Ascending aorta (tissue), 2 donors: ENCODE measurements at regions of chr17 and their contacts with region 1.

Region 1: DNA sequence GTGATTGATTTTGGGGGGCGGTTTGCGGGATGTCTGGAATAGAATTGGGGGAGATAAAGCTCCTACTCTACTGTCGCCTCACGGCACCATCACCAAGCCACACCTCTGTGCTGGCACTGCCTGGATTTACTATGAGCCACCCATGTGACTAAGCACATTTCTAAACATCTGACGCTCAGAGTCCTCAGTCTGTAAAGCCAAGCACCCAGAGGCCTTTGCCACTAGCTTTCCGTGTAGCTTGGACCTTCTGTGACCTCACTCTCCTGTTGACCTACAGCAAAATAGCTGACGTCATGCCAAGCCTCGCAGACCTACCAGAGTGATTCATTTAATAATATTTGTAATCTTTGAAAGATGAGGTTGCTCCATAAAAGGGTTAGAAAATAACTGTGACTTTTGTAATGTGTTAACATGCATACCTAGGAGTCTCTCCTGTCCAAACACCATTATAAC is 38.5 kb upstream of the MYOCD start:
- DNase-seq: peak; percentile 80 to 96
- H3K4me3 ChIP-seq: peak overlapping the region in 1 of 2 donors; percentile 32
- H3K27ac ChIP-seq: peak overlapping the region; percentile 95 to 96
- H3K4me1 ChIP-seq: peaks cover 15 to 45% of the 10 kb centered on the region in 2 donors
- H3K27me3 ChIP-seq: no peaks in the 10 kb centered on the region
- CTCF ChIP-seq: no peak

Region 2: GRCh38 chr17:12545877-12546513 is 81.2 kb before region 1 on chr17:
- intact Hi-C with region 1: loop called (anchors 1 kb)
- DNase-seq: no peak
- H3K4me3 ChIP-seq: no peak overlapping the region
- H3K27ac ChIP-seq: no peak overlapping the region
- H3K4me1 ChIP-seq: peaks cover 0 to 5% of the 10 kb centered on the region in 2 donors
- H3K27me3 ChIP-seq: no peaks in the 10 kb centered on the region
- CTCF ChIP-seq: peak; percentile 59 to 84 (median 78)

Region 3: DNA sequence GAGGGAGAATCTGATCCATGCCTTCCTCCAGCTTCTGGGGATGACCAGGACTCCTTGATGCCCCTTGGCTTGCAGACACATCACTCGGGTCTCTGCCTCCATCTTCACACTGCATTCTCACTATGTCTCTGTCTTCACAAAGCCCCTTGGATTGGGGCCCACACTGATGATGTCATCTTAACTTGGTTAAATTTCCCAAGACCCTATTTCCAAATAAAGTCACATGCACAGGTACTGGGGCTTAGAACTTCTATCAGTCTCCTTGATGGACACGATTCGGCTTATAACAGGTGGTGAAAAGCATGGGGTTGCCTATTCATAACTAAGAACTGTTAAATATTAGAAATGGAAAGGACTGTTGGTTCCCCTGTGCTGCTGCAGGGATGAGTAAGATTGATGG is 73.5 kb before region 1 on chr17:
- intact Hi-C with region 1: loop called (anchors 1 kb)
- DNase-seq: no peak
- H3K4me3 ChIP-seq: peak overlapping the region in 1 of 2 donors; percentile 42
- H3K27ac ChIP-seq: peak overlapping the region; percentile 84 to 93
- H3K4me1 ChIP-seq: peaks cover 8 to 44% of the 10 kb centered on the region in 2 donors
- H3K27me3 ChIP-seq: no peaks in the 10 kb centered on the region
- CTCF ChIP-seq: no peak

Region 4: DNA sequence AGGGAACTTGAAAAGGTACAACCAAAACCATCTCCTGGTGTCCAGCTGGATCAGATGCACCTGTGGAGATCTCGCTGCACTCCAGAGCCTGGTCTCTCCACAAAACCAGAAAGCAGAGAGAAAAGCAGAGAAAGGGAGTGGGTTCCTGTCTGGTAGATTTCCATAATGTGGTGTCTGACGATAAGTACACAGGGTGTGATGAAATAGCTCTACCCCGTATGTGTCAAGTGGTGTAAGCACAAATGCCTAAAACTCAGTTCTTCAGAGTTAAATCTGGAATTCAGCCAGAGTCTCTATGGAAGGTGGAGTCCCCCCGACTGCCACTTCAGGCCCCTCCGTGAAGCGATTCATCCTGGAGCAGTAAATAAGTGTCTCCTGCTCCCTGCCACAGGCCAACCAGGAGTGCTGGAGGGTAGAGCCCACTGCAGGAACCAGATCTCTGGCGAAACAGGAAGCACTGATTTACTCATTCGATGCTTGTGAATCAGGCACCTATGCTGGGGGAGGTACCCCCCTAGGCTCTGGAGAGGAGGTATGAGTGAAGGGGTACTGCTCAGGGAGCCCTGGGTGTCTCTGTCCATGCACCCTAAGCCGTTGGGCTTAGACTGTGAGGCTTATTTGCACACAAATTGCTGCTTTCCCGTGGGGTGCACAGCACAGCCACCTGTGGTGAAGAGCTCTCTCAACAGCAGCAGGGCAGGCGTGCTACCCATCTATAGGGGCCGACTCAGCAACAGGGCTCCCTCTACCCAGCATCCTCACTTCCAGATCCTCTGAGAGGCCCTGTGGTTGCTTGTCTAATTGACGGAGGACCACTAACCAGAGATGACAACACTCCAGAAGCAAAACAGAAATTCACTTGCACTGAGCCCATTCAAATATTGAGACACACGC is 58.6 kb before region 1 on chr17:
- intact Hi-C with region 1: loop called (anchors 5 kb)
- DNase-seq: no peak
- H3K4me3 ChIP-seq: peak overlapping the region in 1 of 2 donors; percentile 45
- H3K27ac ChIP-seq: peak overlapping the region; percentile 77 to 83
- H3K4me1 ChIP-seq: peaks cover 15 to 21% of the 10 kb centered on the region in 2 donors
- H3K27me3 ChIP-seq: no peaks in the 10 kb centered on the region
- CTCF ChIP-seq: no peak

Region 5: GRCh38 chr17:12691182-12691581 is 64.0 kb after region 1 on chr17:
- intact Hi-C with region 1: loop called (anchors 1 kb)
- DNase-seq: peak; percentile 48 to 94
- H3K4me3 ChIP-seq: no peak overlapping the region
- H3K27ac ChIP-seq: peak overlapping the region; percentile 93
- H3K4me1 ChIP-seq: peaks cover 10 to 41% of the 10 kb centered on the region in 2 donors
- H3K27me3 ChIP-seq: no peaks in the 10 kb centered on the region
- CTCF ChIP-seq: no peak

Region 6: DNA sequence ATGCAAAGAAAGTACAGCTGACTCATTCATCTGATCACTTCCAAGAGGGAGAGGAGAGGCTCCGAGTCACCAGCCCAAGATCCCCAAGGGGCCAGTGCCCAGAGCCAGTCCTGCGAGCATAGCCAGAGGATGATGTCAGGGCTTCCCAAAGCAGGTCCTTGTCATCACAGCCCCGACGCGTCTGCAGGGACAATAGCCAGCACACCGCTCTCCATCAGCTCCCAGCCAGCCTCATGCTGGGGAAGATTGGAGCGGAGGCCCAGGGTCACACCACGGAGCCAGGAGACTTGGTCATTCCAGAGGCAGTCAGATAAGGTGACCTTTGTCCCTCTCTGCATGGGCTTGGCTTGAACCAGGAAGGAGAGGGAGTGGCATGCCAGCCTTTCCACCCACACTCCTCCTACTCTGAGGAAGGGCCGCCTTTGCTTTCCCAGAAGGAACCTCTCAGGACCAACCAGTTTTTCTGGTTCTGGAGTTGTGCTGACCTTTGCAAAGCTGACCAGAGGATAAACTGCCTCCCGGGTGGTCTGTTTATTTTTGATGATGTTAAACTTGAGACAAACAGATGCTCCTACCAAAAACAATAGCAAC is 103.8 kb after region 1 on chr17:
- intact Hi-C with region 1: loop called (anchors 5 kb)
- DNase-seq: peak; percentile 77 to 96
- H3K4me3 ChIP-seq: no peak overlapping the region
- H3K27ac ChIP-seq: peak overlapping the region; percentile 81 to 91
- H3K4me1 ChIP-seq: peaks cover 0 to 35% of the 10 kb centered on the region in 2 donors
- H3K27me3 ChIP-seq: no peaks in the 10 kb centered on the region
- CTCF ChIP-seq: no peak

Region 7: DNA sequence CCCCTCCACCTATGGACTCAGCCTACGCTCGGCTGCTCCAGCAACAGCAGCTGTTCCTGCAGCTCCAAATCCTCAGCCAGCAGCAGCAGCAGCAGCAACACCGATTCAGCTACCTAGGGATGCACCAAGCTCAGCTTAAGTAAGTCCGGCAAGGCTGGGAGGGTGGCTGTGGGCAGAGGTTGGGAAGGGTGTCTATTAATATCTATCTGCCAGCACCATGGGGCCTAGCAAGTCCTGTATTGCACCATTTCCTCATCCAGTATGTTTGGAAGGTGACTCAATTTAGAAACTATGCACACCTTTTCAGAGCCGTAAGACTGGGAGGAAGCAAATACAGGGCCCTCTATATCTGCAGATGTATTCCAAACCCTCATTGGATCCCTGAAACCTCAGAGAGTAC is 117.1 kb after region 1 on chr17:
- intact Hi-C with region 1: loop called (anchors 5 kb)
- DNase-seq: no peak
- H3K4me3 ChIP-seq: no peak overlapping the region
- H3K27ac ChIP-seq: peak overlapping the region; percentile 46 to 49
- H3K4me1 ChIP-seq: peaks cover 0 to 11% of the 10 kb centered on the region in 2 donors
- H3K27me3 ChIP-seq: no peaks in the 10 kb centered on the region
- CTCF ChIP-seq: no peak